IMR-90 (cell line): ENCODE measurements at regions of chrX and their contacts with region 1.

Region 1: GRCh38 chrX:69285881-69286564 is 120.8 kb upstream of the PJA1 start:
- DNase-seq: no peak
- ATAC-seq: peak; percentile 80
- H3K4me3 ChIP-seq: peak overlapping the region; percentile 23; the same call in 1 of the 2 replicates
- H3K27ac ChIP-seq: no peak overlapping the region
- H3K4me1 ChIP-seq: peaks cover 3% of the 10 kb centered on the region; the same call in 1 of the 2 replicates
- H3K27me3 ChIP-seq: peaks cover 41% of the 10 kb centered on the region
- CTCF ChIP-seq: peak; percentile 73
- POLR2A ChIP-seq: no peak
- RAD21 ChIP-seq: peak; percentile 79

Region 2: GRCh38 chrX:68183612-68184214 is 1102.3 kb before region 1 on chrX:
- CTCF ChIA-PET with region 1: no interaction called
- POLR2A ChIA-PET with region 1: no interaction called
- dilution Hi-C with region 1: no loop called
- in situ Hi-C with region 1: no loop called
- intact Hi-C with region 1: loop called (anchors 10 kb)
- DNase-seq: peak; percentile 51
- ATAC-seq: peak; percentile 75
- H3K4me3 ChIP-seq: no peak overlapping the region
- H3K27ac ChIP-seq: no peak overlapping the region
- H3K4me1 ChIP-seq: peaks cover 2% of the 10 kb centered on the region; the same call in 1 of the 2 replicates
- H3K27me3 ChIP-seq: no peaks in the 10 kb centered on the region; the same call in 1 of the 2 replicates
- CTCF ChIP-seq: peak; percentile 55
- POLR2A ChIP-seq: no peak
- RAD21 ChIP-seq: peak; percentile 55

Region 3: GRCh38 chrX:68732906-68733493 is 553.0 kb before region 1 on chrX:
- CTCF ChIA-PET with region 1: no interaction called
- POLR2A ChIA-PET with region 1: no interaction called
- dilution Hi-C with region 1: no loop called
- in situ Hi-C with region 1: no loop called
- intact Hi-C with region 1: loop called (anchors 2 kb)
- DNase-seq: peak; percentile 31
- ATAC-seq: peak; percentile 81
- H3K4me3 ChIP-seq: no peak overlapping the region
- H3K27ac ChIP-seq: no peak overlapping the region
- H3K4me1 ChIP-seq: no peaks in the 10 kb centered on the region
- H3K27me3 ChIP-seq: peaks cover 21% of the 10 kb centered on the region
- CTCF ChIP-seq: peak; percentile 67
- POLR2A ChIP-seq: no peak
- RAD21 ChIP-seq: peak; percentile 70

Region 4: DNA sequence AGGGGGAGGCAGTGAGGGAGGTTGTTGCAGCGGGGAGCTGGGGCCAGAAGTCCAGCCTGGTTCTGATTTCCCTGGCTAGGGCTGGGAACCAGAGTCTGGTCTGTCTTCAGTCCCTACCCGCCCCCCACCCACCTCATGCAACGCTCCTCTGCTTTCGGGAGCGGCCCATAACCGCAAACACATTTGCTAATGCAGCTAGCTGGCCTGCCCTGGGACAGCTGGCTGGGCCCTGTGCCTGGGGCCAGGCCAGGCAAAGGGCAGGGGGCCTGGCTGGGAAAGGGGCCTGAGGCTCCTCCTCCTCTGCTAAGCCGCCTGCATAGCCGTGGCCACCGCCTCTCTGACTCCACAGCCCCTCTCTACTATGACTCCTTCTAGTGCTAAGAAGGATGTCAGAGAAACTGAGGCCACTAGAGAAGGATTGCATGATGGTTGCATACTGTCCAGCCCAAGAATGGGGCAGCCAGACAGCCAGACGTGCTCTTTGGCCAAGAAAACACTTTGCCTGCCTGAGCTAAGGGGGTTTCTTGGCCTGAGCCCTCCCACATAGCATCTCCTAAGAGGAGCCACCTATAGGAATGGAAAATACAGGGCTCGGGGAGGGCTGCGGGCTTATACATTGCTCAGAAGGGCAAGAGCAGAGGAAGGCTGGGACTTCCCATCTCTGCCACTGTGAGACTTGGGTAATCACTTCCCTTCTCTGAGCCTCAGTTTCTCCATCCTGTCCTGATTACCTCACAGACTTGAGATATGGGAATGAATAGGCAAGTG is 197.7 kb before region 1 on chrX:
- CTCF ChIA-PET with region 1: no interaction called
- POLR2A ChIA-PET with region 1: no interaction called
- dilution Hi-C with region 1: no loop called
- in situ Hi-C with region 1: no loop called
- intact Hi-C with region 1: loop called (anchors 10 kb)
- DNase-seq: peak; percentile 28
- ATAC-seq: peak; percentile 60
- H3K4me3 ChIP-seq: no peak overlapping the region
- H3K27ac ChIP-seq: no peak overlapping the region
- H3K4me1 ChIP-seq: peaks cover 3% of the 10 kb centered on the region; the same call in 1 of the 2 replicates
- H3K27me3 ChIP-seq: peaks cover 44% of the 10 kb centered on the region
- CTCF ChIP-seq: no peak
- POLR2A ChIP-seq: no peak
- RAD21 ChIP-seq: no peak

Region 5: DNA sequence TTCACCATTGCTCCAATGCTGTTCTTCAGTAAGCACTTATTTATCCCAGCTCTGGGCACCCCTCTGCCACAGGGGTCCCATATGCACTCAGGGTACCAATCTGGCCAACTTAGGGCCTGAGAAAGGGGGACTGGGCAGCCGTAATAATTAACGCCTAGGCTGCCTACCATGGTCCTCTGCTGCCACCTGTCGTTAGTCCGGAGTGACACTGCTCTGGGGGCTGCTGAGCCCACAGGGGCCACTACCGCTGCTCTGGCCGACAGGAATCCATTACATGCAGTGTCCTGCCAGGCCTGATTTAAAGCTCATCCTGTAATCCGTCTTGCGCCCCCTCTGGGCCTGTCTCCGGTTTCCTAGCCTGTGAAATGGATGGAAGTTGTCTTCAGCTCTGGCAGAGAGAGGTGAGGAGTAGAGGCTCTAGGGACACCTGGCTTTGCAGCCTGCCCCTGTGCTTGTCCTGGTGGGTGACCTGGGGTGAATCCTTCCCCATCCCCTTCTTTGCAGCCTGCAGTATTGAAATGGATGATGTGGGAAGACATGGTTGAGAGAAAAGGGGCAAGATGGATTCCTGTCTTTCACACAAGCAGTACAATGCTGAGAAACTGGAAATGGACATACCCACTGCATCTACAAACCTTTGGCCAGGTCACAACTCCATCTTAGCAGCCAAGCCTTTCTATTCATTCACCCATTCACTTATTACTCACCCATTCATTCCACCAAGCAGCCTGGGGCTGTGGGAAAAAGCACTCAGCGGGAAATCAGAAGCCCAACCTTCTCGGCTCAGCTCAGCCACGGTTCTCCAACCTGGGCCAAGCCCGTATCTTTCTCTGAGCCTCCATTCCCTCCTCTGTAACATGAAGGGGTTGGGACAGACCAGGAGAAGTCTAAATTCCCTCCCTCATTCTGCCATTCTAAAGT is 101.8 kb after region 1 on chrX:
- CTCF ChIA-PET with region 1: no interaction called
- POLR2A ChIA-PET with region 1: no interaction called
- dilution Hi-C with region 1: no loop called
- in situ Hi-C with region 1: no loop called
- intact Hi-C with region 1: loop called (anchors 5 kb)
- DNase-seq: peak; percentile 21
- ATAC-seq: peak; percentile 85
- H3K4me3 ChIP-seq: no peak overlapping the region
- H3K27ac ChIP-seq: no peak overlapping the region
- H3K4me1 ChIP-seq: no peaks in the 10 kb centered on the region
- H3K27me3 ChIP-seq: peaks cover 56% of the 10 kb centered on the region
- CTCF ChIP-seq: peak; percentile 66
- POLR2A ChIP-seq: no peak
- RAD21 ChIP-seq: peak; percentile 72

Region 6: GRCh38 chrX:69741721-69742120 is 455.7 kb after region 1 on chrX:
- CTCF ChIA-PET with region 1: no interaction called
- POLR2A ChIA-PET with region 1: no interaction called
- dilution Hi-C with region 1: no loop called
- in situ Hi-C with region 1: no loop called
- intact Hi-C with region 1: no loop called
- DNase-seq: no peak
- ATAC-seq: no peak
- H3K4me3 ChIP-seq: no peak overlapping the region
- H3K27ac ChIP-seq: no peak overlapping the region
- H3K4me1 ChIP-seq: no peaks in the 10 kb centered on the region
- H3K27me3 ChIP-seq: no peaks in the 10 kb centered on the region
- CTCF ChIP-seq: no peak
- POLR2A ChIP-seq: no peak
- RAD21 ChIP-seq: no peak

Region 7: GRCh38 chrX:70262952-70263567 is 977.0 kb after region 1 on chrX:
- CTCF ChIA-PET with region 1: no interaction called
- POLR2A ChIA-PET with region 1: no interaction called
- dilution Hi-C with region 1: no loop called
- in situ Hi-C with region 1: no loop called
- intact Hi-C with region 1: no loop called
- DNase-seq: peak; percentile 28
- ATAC-seq: peak; percentile 64
- H3K4me3 ChIP-seq: no peak overlapping the region
- H3K27ac ChIP-seq: no peak overlapping the region
- H3K4me1 ChIP-seq: no peaks in the 10 kb centered on the region
- H3K27me3 ChIP-seq: peaks cover 11% of the 10 kb centered on the region
- CTCF ChIP-seq: peak; percentile 52
- POLR2A ChIP-seq: no peak
- RAD21 ChIP-seq: peak; percentile 55